ENCODE measurements at regions of chr14 and their contacts with region 1.

Region 1: DNA sequence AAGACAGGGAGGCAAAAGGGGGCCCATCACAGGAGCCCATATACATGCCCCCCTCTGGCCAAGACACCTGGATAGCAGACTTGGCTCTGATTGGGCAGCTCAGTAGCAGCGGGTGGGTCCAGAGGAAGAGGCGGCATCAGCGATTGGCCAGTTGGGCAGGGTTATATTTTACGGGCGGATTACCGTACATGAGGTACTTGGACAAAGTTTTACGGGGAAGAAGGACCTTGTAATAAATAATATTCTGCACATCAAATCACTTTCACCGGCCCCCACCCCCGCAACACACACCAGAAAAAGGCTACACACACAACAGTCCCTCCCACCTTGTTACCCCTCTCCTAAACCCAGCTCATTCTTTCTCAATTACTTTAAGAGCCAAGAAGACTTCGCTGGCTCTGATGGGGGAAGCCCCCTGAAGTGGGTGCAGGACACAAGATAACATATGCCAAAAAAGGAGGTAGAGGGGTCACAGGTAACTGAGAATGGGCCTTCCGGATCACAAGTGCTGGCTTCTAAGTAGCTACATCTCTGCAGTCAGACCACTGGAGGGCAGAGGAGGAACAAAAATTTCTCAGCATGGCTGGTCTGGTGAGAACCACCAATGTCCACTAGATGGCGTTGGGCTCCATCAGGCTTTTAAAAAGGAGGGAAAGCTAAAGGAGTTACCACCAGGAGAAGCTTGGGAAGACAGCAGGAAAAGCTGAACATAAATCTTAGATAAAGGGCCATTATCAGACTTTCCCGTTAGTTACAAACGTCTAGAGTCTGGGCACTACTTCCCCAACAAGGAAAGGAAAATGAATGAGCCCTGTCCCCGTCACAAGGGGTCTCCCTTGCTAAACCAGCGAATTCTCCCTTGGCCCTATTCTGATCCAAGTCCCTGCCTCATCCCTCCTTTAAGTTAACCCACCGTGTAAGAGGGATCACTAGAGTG is 11.4 kb upstream of the CDH24 start:
- DNase-seq: peak; percentile 72 to 77
- H3K4me3 ChIP-seq: no peak overlapping the region
- H3K27ac ChIP-seq: no peak overlapping the region
- H3K4me1 ChIP-seq: peaks cover 34% of the 10 kb centered on the region
- H3K27me3 ChIP-seq: no peaks in the 10 kb centered on the region
- CTCF ChIP-seq: peak; percentile 90

Region 2: DNA sequence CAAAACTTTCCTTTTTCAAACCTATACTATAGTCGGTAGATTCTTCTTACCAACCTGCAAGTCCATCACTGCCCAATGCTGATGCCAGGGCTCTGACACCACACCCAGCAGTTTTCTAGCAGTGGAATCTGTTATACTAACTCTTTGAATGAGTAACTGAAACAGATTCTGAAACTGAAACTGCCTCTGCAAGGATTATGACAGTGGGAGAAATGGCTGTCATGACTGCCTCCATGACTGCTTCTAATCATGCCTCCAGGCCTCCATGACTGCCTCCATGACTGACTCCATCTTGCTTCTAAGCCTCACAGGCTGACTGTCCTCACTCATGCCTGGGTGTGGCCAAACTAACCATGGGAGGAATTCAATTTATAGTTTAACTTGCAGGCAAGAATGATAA is 331.7 kb before region 1 on chr14:
- CTCF ChIA-PET with region 1: no interaction called
- POLR2A ChIA-PET with region 1: no interaction called
- intact Hi-C with region 1: no loop called
- DNase-seq: no peak
- H3K4me3 ChIP-seq: no peak overlapping the region
- H3K27ac ChIP-seq: no peak overlapping the region
- H3K4me1 ChIP-seq: no peaks in the 10 kb centered on the region
- H3K27me3 ChIP-seq: no peaks in the 10 kb centered on the region
- CTCF ChIP-seq: no peak

Region 3: DNA sequence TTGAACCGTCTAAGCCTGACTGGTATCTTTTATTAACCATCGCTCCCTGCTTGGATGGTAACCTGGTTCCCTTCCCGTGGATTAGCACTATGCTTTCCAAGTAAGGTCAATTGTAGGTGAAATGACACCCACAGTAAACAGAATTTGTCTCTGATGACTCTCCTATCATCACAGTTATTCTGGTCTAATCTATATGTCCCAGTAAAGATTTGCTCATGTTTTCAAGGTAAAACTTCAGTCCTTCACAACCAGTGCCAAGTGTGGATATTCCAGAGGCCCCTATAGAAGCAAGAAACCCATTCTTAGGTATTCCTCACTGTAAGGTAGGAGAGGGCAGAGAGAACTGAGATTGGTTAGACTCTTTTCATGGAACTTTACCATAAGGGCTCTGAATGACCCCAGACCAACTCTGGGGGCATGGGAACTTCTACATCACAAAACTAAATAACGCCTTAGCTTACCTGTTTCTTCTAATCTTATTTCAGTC is 101.9 kb before region 1 on chr14:
- CTCF ChIA-PET with region 1: no interaction called
- POLR2A ChIA-PET with region 1: no interaction called
- intact Hi-C with region 1: no loop called
- DNase-seq: no peak
- H3K4me3 ChIP-seq: no peak overlapping the region
- H3K27ac ChIP-seq: no peak overlapping the region
- H3K4me1 ChIP-seq: no peaks in the 10 kb centered on the region
- H3K27me3 ChIP-seq: no peaks in the 10 kb centered on the region
- CTCF ChIP-seq: no peak

Region 4: GRCh38 chr14:23112359-23113178 is 43.8 kb after region 1 on chr14:
- CTCF ChIA-PET with region 1: interaction called, 8 read pairs
- POLR2A ChIA-PET with region 1: interaction called, 31 read pairs
- intact Hi-C with region 1: loop called (anchors 2 kb)
- DNase-seq: peak in 1 of 2 experiments; percentile 62
- H3K4me3 ChIP-seq: no peak overlapping the region
- H3K27ac ChIP-seq: no peak overlapping the region
- H3K4me1 ChIP-seq: peaks cover 41% of the 10 kb centered on the region
- H3K27me3 ChIP-seq: no peaks in the 10 kb centered on the region
- CTCF ChIP-seq: no peak

Region 5: GRCh38 chr14:23294734-23295561 is 226.2 kb after region 1 on chr14:
- CTCF ChIA-PET with region 1: interaction called, 14 read pairs
- POLR2A ChIA-PET with region 1: no interaction called
- intact Hi-C with region 1: loop called (anchors 10 kb)
- DNase-seq: peak in 1 of 2 experiments; percentile 27
- H3K4me3 ChIP-seq: no peak overlapping the region
- H3K27ac ChIP-seq: no peak overlapping the region
- H3K4me1 ChIP-seq: peaks cover 1% of the 10 kb centered on the region
- H3K27me3 ChIP-seq: no peaks in the 10 kb centered on the region
- CTCF ChIP-seq: peak; percentile 85

Region 6: DNA sequence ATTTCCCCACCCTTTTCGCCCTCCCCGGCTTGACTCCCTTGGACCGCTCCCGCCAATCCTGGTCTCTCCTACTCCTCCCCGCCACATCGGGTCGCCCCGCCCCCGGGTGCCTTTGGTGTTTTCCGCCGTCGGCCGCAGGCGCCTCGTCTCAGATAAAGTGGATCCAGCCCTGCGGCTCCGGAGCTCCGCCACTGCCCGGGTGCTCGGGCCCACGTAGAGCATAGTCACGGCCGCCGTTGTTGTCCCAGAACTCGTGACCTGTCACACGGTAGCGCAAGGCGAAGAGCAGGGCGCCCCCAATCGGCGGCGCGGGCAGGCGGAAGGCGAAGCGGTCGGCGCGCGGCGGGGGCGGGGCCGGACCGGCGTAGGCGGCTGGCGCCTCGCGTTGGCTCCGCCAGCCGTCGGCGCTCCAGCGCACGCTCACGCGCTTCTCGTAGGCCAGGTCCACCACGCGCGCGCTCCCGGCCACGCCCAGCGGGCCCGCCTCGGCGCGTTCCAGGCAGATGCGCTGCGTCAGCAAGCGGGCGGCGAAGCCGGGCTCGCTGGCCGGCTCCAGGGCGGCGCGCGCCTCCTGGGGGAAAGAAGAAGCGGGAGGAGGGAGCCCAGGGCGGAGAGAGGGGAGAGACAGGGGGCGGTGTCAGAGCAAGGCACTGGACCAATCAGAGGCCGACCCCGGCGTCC is 232.7 kb after region 1 on chr14:
- CTCF ChIA-PET with region 1: interaction called, 4 read pairs
- POLR2A ChIA-PET with region 1: no interaction called
- intact Hi-C with region 1: loop called (anchors 10 kb)
- DNase-seq: peak; percentile 86 to 97
- H3K4me3 ChIP-seq: peak overlapping the region; percentile 71
- H3K27ac ChIP-seq: peak overlapping the region; percentile 72
- H3K4me1 ChIP-seq: peaks cover 17% of the 10 kb centered on the region
- H3K27me3 ChIP-seq: no peaks in the 10 kb centered on the region
- CTCF ChIP-seq: peak; percentile 68

Region 7: DNA sequence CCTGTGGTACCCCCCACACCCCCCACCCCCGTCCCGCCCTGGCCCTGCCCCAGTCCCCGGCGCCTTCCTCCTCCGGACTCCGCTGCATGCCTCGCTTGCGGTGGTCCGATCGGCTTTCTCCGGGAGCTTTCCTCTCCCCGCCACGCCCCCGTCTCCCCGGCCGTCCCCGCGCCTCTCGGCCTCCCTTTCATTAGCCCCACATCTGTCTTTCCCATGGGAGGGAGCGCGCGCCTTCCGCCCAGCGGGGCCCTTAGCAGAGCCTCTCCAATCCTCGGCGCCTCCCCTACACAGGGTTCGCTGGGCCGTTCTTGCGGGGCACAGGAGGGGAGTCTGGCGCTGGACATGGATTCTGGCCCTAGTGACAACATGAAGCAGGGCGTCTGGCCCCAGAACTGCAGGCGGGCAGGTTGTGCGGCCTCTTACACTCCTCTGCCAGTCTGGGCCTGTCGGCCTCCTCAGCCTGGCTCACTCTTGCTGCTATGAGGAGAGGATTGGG is 297.7 kb after region 1 on chr14:
- CTCF ChIA-PET with region 1: no interaction called
- POLR2A ChIA-PET with region 1: no interaction called
- intact Hi-C with region 1: no loop called
- DNase-seq: no peak
- H3K4me3 ChIP-seq: no peak overlapping the region
- H3K27ac ChIP-seq: no peak overlapping the region
- H3K4me1 ChIP-seq: no peaks in the 10 kb centered on the region
- H3K27me3 ChIP-seq: peaks cover 49% of the 10 kb centered on the region
- CTCF ChIP-seq: no peak

Measured in PC-9 (cell line).